Heart right ventricle (tissue), 16 donors: ENCODE measurements at regions of chr12 and their contacts with region 1.

Region 1: DNA sequence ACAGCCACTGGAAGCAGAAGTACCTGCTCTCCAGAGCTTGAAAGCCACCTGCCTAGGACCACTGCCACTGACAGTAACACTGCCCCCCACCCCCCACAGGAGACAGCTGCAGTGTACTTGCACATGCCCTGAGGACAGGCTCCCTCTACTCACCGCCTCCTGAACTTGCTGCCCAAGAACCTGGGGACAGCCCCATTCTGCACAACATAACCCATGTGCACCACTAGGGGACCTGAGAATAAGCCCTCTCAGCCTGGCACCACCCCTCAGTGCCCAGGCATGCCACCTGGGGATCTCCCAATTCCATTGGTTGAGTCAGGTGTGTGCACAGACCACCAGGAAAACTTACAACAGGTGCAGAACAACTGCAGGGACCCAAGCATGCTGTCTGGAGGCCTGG is 67.1 kb upstream of the KIF21A start:
- DNase-seq: no peak
- ATAC-seq: peak in 1 of 8 donors; percentile 34
- H3K4me3 ChIP-seq: no peak overlapping the region
- H3K27ac ChIP-seq: no peak overlapping the region
- H3K4me1 ChIP-seq: no peaks in the 10 kb centered on the region
- H3K27me3 ChIP-seq: no peaks in the 10 kb centered on the region
- CTCF ChIP-seq: no peak

Region 2: GRCh38 chr12:39467432-39467870 is 42.5 kb before region 1 on chr12:
- intact Hi-C with region 1: loop called in 1 of 10 experiments (anchors 5 kb)
- DNase-seq: no peak
- ATAC-seq: no peak
- H3K4me3 ChIP-seq: no peak overlapping the region
- H3K27ac ChIP-seq: peak overlapping the region in 1 of 10 donors; percentile 40
- H3K4me1 ChIP-seq: peaks cover 0 to 4% (median 0%) of the 10 kb centered on the region in 9 donors
- H3K27me3 ChIP-seq: no peaks in the 10 kb centered on the region
- CTCF ChIP-seq: no peak